ENCODE measurements at regions of chr14 and their contacts with region 1.

Region 1: DNA sequence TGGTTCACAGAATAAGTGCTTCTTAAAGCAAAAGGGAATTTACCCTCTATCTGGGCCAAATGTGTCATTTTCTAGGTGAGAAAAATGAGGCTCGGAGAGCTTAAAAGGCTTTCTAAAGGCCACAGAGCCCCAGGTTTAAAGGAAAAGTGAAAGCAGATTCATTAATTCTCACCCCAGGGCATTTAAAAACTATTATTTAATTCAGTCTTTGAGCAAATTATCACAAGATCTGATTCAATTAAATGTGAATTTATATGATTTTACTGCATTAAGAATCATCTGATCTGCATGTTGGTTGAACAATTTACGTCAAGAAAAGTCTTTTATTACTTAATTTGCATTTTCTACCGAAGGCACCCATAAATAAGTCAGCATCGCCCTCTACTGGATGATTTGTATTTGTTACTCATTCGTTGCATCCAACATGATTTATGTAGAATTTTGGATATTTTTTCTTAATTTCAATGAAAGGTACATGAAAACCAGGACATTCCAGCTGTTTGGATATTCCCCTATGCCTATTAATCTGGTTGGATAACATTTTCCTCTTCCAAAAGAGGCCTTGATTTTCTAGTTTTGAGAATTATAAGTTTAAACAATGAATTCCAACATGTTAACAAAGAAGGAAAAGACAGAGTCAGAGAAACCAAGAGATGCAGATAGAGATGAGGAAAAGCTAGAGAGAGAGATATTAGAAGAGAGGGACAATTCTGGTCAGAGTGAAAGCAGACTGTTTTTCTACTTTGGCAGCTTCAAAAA is 19.1 kb upstream of the DHRS7 start:
- DNase-seq: peak; percentile 18
- ATAC-seq: peak; percentile 89
- H3K4me3 Mint-ChIP-seq: peak overlapping the region; percentile 72
- H3K27ac Mint-ChIP-seq: peak overlapping the region; percentile 91
- H3K4me1 Mint-ChIP-seq: peaks cover 20% of the 10 kb centered on the region
- H3K27me3 Mint-ChIP-seq: no peaks in the 10 kb centered on the region
- CTCF ChIP-seq: peak; percentile 93

Region 2: GRCh38 chr14:59632381-59632780 is 551.9 kb before region 1 on chr14:
- CTCF ChIA-PET with region 1: interaction called, 19 read pairs
- POLR2A ChIA-PET with region 1: no interaction called
- intact Hi-C with region 1: no loop called
- DNase-seq: peak; percentile 55
- ATAC-seq: no peak
- H3K4me3 Mint-ChIP-seq: no peak overlapping the region
- H3K27ac Mint-ChIP-seq: no peak overlapping the region
- H3K4me1 Mint-ChIP-seq: peaks cover 2% of the 10 kb centered on the region
- H3K27me3 Mint-ChIP-seq: peaks cover 43% of the 10 kb centered on the region
- CTCF ChIP-seq: peak; percentile 62

Region 3: DNA sequence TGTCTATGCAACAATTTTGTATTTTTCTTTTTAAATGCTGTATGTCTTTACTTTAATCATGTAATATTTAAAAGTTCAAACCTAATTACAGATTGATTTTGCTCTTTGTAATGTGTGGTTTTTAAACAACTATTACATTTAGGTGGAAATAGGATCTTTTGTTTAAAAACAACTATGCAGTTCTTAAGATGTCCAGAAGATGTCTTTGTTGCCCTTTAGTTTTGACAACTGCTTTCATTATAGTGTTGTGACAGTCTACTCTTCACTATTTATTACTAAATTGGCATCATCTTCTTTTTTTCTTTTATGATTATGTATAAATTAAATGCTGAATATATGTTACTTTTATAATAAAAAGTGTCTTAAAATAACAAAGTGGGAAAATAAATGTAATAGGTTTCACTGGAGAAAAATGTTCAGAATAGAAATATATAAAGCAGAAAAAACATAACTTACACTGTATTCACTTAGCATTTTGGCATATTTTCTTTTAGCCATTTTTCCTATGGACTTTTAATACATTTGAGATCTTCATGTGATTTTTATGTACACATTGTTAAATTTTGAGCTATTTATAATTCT is 119.7 kb before region 1 on chr14:
- CTCF ChIA-PET with region 1: interaction called, 37 read pairs
- POLR2A ChIA-PET with region 1: no interaction called
- intact Hi-C with region 1: loop called (anchors 1 kb)
- DNase-seq: no peak
- ATAC-seq: peak; percentile 60
- H3K4me3 Mint-ChIP-seq: no peak overlapping the region
- H3K27ac Mint-ChIP-seq: no peak overlapping the region
- H3K4me1 Mint-ChIP-seq: no peaks in the 10 kb centered on the region
- H3K27me3 Mint-ChIP-seq: peaks cover 3% of the 10 kb centered on the region
- CTCF ChIP-seq: peak; percentile 58

Region 4: DNA sequence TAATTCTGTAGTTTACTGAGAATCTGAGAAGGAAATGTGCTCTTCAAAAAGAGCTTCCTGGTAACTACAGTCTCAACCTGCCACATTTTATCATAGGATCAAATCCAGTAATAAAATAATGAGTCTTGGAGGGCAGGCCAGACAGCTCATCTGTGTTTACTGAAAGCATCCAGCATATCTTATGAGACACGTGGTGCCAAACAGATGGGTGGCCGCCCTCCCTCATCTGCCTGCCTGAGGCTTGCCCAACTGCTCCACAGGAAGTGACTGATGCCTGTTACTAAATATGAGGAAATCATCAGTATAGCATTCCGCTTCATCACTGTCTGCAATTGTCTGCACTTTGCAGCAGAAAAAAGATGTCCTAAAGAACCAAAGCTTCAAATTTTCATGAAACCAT is 32.6 kb before region 1 on chr14:
- CTCF ChIA-PET with region 1: interaction called, 10 read pairs
- POLR2A ChIA-PET with region 1: no interaction called
- intact Hi-C with region 1: no loop called
- DNase-seq: peak; percentile 86
- ATAC-seq: peak; percentile 98
- H3K4me3 Mint-ChIP-seq: no peak overlapping the region
- H3K27ac Mint-ChIP-seq: peak overlapping the region; percentile 85
- H3K4me1 Mint-ChIP-seq: peaks cover 41% of the 10 kb centered on the region
- H3K27me3 Mint-ChIP-seq: no peaks in the 10 kb centered on the region
- CTCF ChIP-seq: no peak

Region 5: GRCh38 chr14:60195179-60195810 is 11.0 kb after region 1 on chr14:
- CTCF ChIA-PET with region 1: interaction called, 49 read pairs
- POLR2A ChIA-PET with region 1: no interaction called
- intact Hi-C with region 1: no loop called
- DNase-seq: no peak
- ATAC-seq: peak; percentile 51
- H3K4me3 Mint-ChIP-seq: no peak overlapping the region
- H3K27ac Mint-ChIP-seq: no peak overlapping the region
- H3K4me1 Mint-ChIP-seq: peaks cover 11% of the 10 kb centered on the region
- H3K27me3 Mint-ChIP-seq: peaks cover 3% of the 10 kb centered on the region
- CTCF ChIP-seq: no peak

Region 6: GRCh38 chr14:60266021-60266937 is 82.0 kb after region 1 on chr14:
- CTCF ChIA-PET with region 1: interaction called, 10 read pairs
- POLR2A ChIA-PET with region 1: no interaction called
- intact Hi-C with region 1: no loop called
- DNase-seq: peak; percentile 44
- ATAC-seq: peak; percentile 65
- H3K4me3 Mint-ChIP-seq: no peak overlapping the region
- H3K27ac Mint-ChIP-seq: no peak overlapping the region
- H3K4me1 Mint-ChIP-seq: peaks cover 14% of the 10 kb centered on the region
- H3K27me3 Mint-ChIP-seq: no peaks in the 10 kb centered on the region
- CTCF ChIP-seq: peak; percentile 71